Endothelial cell of umbilical vein (primary cell): ENCODE measurements at regions of chr7 and their contacts with region 1.

Region 1: GRCh38 chr7:129825496-129826267 is 127.1 kb downstream of the UBE2H start:
- DNase-seq: peak; percentile 73
- H3K4me3 ChIP-seq: peak overlapping the region; percentile 53 to 75 (median 71)
- H3K27ac ChIP-seq: peak overlapping the region; percentile 59
- H3K4me1 ChIP-seq: peaks cover 8% of the 10 kb centered on the region
- H3K27me3 ChIP-seq: no peaks in the 10 kb centered on the region
- CTCF ChIP-seq: peak in 1 of 2 donors; percentile 72
- POLR2A ChIP-seq: no peak

Region 2: DNA sequence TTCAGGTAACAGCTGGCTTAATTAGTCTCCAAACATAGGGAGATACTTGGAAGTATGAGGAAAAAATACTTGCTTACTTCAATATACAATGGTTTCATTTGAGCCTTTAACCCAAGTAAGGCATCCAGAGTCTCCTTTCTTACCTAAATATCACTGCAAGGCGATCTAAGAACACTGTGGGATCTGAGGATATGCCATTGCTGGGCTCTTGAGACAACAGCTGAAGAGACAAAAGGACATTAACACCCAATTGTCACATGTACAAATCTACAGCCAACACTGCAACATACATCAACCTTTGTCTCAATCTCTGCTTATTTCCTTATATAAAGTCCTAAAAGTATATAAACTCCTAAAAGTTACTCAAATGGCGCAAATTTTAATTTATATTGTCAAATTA is 843.6 kb before region 1 on chr7:
- CTCF ChIA-PET with region 1: no interaction called
- POLR2A ChIA-PET with region 1: no interaction called
- dilution Hi-C with region 1: no loop called
- intact Hi-C with region 1: no loop called
- DNase-seq: no peak
- H3K4me3 ChIP-seq: no peak overlapping the region
- H3K27ac ChIP-seq: no peak overlapping the region
- H3K4me1 ChIP-seq: no peaks in the 10 kb centered on the region
- H3K27me3 ChIP-seq: no peaks in the 10 kb centered on the region
- CTCF ChIP-seq: no peak
- POLR2A ChIP-seq: no peak

Region 3: DNA sequence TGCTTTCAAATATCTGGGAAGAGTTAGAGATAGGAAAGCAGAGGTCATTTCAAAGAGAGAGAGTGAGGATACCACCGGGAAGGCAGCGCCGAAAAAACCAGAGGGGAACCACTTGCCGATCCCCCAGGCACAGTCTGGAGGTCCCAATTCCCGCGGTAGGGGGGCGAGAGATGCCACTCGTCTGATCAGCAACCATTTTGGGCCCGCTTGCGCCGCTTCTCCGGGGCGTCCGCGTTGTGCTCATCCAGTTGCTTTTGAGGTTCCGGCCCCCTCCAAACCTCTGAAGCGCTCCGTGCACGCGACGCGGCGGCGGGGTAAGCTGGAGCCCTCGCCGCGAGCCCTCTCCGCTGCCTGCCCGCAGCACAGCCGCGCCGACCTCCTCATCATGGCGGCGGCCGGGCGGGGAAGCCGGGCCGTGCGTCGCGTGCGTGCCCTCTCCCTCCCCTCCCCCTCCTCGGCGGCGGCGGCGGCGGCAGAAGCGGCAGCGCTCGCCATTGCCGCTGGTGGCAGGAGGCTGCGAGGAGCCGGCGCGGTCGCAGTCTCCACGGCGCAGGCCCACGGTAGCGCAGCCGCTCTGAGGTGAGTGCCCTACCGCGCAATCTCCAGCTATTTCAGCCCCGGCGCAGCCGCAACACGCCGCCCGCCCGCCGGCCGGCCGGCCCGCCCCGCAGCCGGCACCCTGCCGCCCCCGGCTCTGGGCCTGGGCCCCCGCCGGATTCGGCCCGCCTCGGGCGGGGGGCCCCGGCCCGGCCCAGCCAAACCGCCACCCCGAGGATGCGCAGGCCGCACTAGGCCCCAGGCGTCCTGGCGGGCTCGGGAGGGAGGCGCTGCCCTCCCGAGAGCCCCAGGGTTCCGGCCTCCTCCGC is 214.2 kb before region 1 on chr7 and contains the start of gene NRF1:
- CTCF ChIA-PET with region 1: interaction called, 9 read pairs
- POLR2A ChIA-PET with region 1: no interaction called
- dilution Hi-C with region 1: no loop called
- intact Hi-C with region 1: loop called (anchors 1 kb)
- DNase-seq: peak; percentile 92
- H3K4me3 ChIP-seq: peak within 1 kb of the TSS; percentile 84 to 96 (median 95)
- H3K27ac ChIP-seq: peak within 1 kb of the TSS; percentile 81
- H3K4me1 ChIP-seq: peaks cover 13% of the 10 kb centered on the region
- H3K27me3 ChIP-seq: no peaks in the 10 kb centered on the region
- CTCF ChIP-seq: peak in 1 of 2 donors; percentile 10
- POLR2A ChIP-seq: peak; percentile 87
- total RNA-seq, gene NRF1: 17.4 and 20.3 TPM in 2 replicates

Region 4: GRCh38 chr7:129664029-129665012 is 161.4 kb before region 1 on chr7:
- CTCF ChIA-PET with region 1: interaction called, 54 read pairs
- POLR2A ChIA-PET with region 1: no interaction called
- dilution Hi-C with region 1: no loop called
- intact Hi-C with region 1: loop called (anchors 1 kb)
- DNase-seq: peak; percentile 75
- H3K4me3 ChIP-seq: no peak overlapping the region
- H3K27ac ChIP-seq: no peak overlapping the region
- H3K4me1 ChIP-seq: peaks cover 7% of the 10 kb centered on the region
- H3K27me3 ChIP-seq: no peaks in the 10 kb centered on the region
- CTCF ChIP-seq: peak; percentile 33 to 43
- POLR2A ChIP-seq: no peak

Region 5: DNA sequence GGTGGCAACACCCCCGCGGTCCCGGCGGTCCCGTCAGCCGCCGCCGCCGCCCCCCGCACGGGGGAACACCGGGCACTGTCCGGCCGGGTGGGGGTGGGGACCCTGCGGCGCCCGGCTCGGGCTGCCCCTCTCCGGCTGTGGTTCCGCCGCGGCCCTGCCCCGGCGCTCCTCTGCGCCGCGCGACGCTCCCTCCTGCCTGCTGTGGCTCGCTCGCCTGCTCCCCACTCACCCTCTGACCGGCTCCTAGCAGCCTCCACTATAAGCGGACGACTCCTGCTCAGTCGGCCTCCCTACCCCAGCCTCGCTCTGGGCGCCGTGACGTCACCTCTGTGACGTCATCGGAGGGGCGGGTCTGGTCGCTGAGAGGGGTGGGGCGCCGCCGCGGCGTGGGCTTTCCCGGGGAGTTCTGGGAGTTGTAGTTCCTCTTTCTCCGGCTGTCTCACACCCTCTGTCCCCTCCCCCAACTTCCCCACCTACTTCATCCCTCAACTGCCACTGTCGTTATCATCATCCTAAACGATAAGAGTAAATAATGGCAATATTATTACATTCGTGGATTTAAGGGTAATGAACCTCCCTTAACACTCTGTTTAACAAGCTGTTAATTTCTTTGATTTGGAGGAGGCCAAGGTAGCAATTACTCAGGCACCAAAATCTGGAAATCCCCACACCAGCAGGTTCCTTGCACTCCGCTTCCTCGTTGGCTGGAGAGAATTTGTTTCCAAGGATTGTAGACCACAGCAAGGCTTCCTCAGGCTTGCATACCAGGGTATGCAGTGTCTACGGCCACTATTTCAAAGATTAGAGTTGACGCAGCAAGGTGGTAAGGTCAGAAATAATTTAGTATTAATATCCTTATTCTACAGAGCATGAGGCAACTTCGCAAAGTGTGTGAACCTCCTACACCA is 127.2 kb after region 1 on chr7 and contains the start of gene UBE2H:
- CTCF ChIA-PET with region 1: interaction called, 8 read pairs
- POLR2A ChIA-PET with region 1: no interaction called
- dilution Hi-C with region 1: no loop called
- intact Hi-C with region 1: loop called (anchors 5 kb)
- DNase-seq: peak; percentile 92
- H3K4me3 ChIP-seq: peak within 1 kb of the TSS; percentile 73 to 99 (median 91)
- H3K27ac ChIP-seq: peak within 1 kb of the TSS; percentile 97
- H3K4me1 ChIP-seq: peaks cover 23% of the 10 kb centered on the region
- H3K27me3 ChIP-seq: no peaks in the 10 kb centered on the region
- CTCF ChIP-seq: no peak
- POLR2A ChIP-seq: peak; percentile 90
- total RNA-seq, gene UBE2H: 82.2 and 90.1 TPM in 2 replicates